PC-9 (cell line): ENCODE measurements at regions of chr5 and their contacts with region 1.

Region 1: DNA sequence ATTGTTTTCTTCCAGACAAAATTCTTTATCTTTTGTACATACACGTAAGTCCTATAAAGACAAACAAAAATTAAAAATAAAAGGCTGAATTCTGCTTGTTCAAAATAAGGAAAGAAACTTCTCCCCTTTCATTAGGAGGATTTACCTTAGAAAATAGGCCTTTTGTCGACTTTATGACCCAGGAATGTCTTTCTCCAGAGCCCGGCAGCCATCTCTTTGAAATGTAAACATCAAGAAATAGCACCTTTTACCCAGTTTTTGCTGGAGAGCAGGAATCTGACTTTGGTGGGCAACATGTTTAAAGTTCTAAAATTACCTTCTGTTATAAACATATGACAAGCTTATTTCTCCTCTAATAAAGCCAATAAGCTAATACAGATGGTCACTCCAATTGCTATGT is 373.0 kb upstream of the FTMT start:
- DNase-seq: no peak
- H3K4me3 ChIP-seq: no peak overlapping the region
- H3K27ac ChIP-seq: no peak overlapping the region
- H3K4me1 ChIP-seq: no peaks in the 10 kb centered on the region
- H3K27me3 ChIP-seq: no peaks in the 10 kb centered on the region
- CTCF ChIP-seq: no peak

Region 2: DNA sequence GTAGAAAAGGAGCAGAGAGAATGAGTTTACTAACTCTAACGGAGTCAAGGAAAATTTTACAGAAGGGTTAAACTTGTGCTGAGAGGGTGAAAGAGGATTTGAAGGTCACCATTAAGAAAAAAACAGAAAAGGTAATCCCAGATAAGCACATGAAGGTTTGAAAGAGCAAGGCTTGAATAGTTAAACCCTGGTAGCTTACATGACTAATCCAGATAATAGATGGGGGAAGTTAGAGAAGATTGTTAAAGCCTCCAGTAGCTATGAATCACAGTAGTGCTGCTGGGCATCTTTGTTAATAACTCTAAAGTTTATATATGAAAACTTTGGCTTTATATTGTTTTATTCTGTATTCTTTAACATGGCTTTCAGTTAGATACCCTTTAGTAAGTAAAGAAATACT is 18.5 kb after region 1 on chr5:
- CTCF ChIA-PET with region 1: no interaction called
- POLR2A ChIA-PET with region 1: no interaction called
- intact Hi-C with region 1: no loop called
- DNase-seq: no peak
- H3K4me3 ChIP-seq: no peak overlapping the region
- H3K27ac ChIP-seq: no peak overlapping the region
- H3K4me1 ChIP-seq: no peaks in the 10 kb centered on the region
- H3K27me3 ChIP-seq: no peaks in the 10 kb centered on the region
- CTCF ChIP-seq: no peak

Region 3: GRCh38 chr5:121630402-121630801 is 151.8 kb after region 1 on chr5:
- CTCF ChIA-PET with region 1: no interaction called
- POLR2A ChIA-PET with region 1: no interaction called
- intact Hi-C with region 1: no loop called
- DNase-seq: no peak
- H3K4me3 ChIP-seq: no peak overlapping the region
- H3K27ac ChIP-seq: no peak overlapping the region
- H3K4me1 ChIP-seq: no peaks in the 10 kb centered on the region; the same call in 1 of the 2 replicates
- H3K27me3 ChIP-seq: no peaks in the 10 kb centered on the region
- CTCF ChIP-seq: no peak

Region 4: DNA sequence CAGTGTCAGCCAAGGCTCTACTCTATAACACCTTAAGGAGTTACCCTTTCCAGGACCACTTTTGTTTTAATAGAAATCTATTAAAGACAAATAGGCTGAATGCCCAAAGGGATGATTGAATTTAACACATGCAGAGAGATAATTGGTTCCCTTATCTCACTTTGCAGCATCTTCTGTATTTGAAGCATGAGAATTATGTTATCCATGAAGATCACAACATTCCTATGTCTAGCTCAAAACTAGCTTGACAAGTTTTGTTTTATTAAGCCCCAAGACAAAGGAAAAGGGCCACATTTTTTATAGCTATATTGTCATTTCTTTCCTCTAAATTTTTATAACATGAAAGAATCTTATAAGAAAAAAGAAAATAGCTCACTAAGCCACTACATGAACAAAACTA is 315.1 kb after region 1 on chr5:
- CTCF ChIA-PET with region 1: no interaction called
- POLR2A ChIA-PET with region 1: interaction called, 33 read pairs
- intact Hi-C with region 1: no loop called
- DNase-seq: no peak
- H3K4me3 ChIP-seq: no peak overlapping the region
- H3K27ac ChIP-seq: no peak overlapping the region
- H3K4me1 ChIP-seq: no peaks in the 10 kb centered on the region
- H3K27me3 ChIP-seq: no peaks in the 10 kb centered on the region
- CTCF ChIP-seq: no peak